Left ventricle myocardium superior (tissue), 1 donor: ENCODE measurements at regions of chr3 and their contacts with region 1.

Region 1: DNA sequence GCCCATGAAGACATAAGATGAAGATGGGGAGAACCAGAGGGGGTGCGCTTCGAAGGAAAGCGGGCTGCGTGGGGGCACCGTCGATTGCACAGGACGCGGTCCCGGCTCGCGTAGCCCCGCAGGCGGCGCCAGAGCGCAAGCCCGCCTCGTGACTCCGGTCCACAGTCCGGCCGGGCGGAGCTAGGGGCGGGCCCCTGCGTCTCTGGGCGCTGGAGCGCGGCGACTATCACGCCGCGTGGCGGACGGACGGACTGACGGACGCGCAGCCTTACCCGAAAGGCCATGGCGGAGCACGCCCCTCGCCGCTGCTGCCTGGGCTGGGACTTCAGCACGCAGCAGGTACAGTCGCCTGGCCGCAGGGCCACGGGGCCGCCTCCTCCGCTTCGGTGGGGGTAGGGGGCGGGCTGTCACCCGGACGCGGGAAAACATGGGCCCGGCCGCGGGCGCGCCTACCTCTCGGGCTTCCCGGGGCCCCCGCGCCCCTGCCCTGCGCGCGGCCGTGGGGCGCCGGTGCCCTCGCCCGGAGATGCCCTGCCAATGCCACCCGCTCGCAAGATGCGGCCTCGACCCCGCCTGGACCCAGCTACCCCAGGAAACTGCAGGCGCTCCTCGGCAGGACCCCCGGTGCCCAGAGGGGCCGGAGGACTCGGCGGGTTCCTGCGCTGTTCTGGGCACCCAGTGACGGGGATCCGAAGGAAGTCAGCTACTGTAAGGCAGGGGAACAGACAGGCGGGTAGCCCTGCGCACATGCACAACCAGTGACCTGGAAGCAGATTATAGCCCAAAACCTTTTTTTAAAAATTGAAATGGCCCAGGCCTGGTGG is at the start of gene XYLB:
- DNase-seq: peak; percentile 95
- ATAC-seq: peak; percentile 100
- total RNA-seq, gene XYLB: 0.45 TPM

Region 2: GRCh38 chr3:38479431-38480092 is 132.8 kb after region 1 on chr3:
- intact Hi-C with region 1: loop called (anchors 5 kb)
- DNase-seq: peak; percentile 66
- ATAC-seq: peak; percentile 86

Region 3: DNA sequence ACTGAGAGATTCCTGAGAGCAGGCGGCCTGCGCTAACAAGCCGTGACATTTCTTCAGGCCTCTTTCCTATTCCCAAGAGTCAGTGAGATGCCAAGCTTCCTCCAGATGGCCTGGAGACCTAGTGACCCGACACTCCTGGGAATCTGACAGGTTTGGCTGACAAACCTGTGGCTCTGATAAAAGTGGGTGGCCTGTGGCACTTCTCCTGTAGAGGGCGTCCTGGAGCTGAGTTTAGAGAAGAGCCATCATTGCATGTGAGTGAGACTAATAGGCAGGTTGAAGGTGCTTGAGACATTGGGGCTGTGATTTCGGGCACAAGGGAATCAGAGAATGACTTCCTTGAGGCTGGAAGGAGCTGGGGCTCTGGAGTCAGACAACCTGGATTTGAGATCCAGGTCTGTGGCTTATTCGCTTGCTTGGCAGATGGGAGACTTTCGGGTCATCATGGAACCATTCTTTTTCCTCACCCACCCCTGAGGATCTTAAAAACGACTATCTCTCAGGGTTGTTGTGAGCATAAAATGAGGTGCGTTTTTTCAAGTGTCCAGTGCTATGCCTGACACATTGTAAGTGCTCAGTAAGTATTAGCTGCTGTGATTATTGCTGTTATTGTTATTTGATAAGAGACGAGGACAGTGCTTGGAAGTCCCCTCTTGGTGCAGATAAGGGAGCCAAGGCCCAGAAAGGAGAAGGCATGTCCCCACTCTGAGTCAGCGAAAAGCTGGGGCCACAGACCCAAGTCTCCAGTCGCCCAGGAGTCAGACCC is 392.0 kb after region 1 on chr3:
- intact Hi-C with region 1: no loop called
- DNase-seq: no peak
- ATAC-seq: peak; percentile 43